Activated T-helper 2 cell treated with anti-CD3 and anti-CD28 coated beads, Interferon-gamma antibody, Interleukin-2, Interleukin-4, amounts not matched to agents 10 μg/mL and 5 μg/mL and 100 μg/mL, durations not matched to agents 14 hours and 24 hours and 36 hours (primary cell): ENCODE measurements at regions of chr6 and their contacts with region 1.

Region 1: GRCh38 chr6:27146706-27147505 is 100.6 kb upstream of the PRSS16 start:
- DNase-seq: peak; percentile 84
- H3K4me3 Mint-ChIP-seq: no peak overlapping the region
- H3K27ac Mint-ChIP-seq: no peak overlapping the region
- H3K4me1 Mint-ChIP-seq: peaks cover 12% of the 10 kb centered on the region
- H3K27me3 Mint-ChIP-seq: no peaks in the 10 kb centered on the region

Region 2: GRCh38 chr6:27132532-27133280 is 14.2 kb before region 1 on chr6:
- intact Hi-C with region 1: loop called (anchors 1 kb)
- DNase-seq: peak; percentile 95
- H3K4me3 Mint-ChIP-seq: no peak overlapping the region
- H3K27ac Mint-ChIP-seq: no peak overlapping the region
- H3K4me1 Mint-ChIP-seq: peaks cover 38% of the 10 kb centered on the region
- H3K27me3 Mint-ChIP-seq: no peaks in the 10 kb centered on the region

Region 3: GRCh38 chr6:27864906-27865849 is 718.3 kb after region 1 on chr6:
- intact Hi-C with region 1: loop called (anchors 1 kb)
- DNase-seq: peak; percentile 83
- H3K4me3 Mint-ChIP-seq: peak overlapping the region; percentile 98
- H3K27ac Mint-ChIP-seq: peak overlapping the region; percentile 99
- H3K4me1 Mint-ChIP-seq: peaks cover 62% of the 10 kb centered on the region
- H3K27me3 Mint-ChIP-seq: no peaks in the 10 kb centered on the region